ENCODE measurements at regions of chr10 and their contacts with region 1.

Region 1: DNA sequence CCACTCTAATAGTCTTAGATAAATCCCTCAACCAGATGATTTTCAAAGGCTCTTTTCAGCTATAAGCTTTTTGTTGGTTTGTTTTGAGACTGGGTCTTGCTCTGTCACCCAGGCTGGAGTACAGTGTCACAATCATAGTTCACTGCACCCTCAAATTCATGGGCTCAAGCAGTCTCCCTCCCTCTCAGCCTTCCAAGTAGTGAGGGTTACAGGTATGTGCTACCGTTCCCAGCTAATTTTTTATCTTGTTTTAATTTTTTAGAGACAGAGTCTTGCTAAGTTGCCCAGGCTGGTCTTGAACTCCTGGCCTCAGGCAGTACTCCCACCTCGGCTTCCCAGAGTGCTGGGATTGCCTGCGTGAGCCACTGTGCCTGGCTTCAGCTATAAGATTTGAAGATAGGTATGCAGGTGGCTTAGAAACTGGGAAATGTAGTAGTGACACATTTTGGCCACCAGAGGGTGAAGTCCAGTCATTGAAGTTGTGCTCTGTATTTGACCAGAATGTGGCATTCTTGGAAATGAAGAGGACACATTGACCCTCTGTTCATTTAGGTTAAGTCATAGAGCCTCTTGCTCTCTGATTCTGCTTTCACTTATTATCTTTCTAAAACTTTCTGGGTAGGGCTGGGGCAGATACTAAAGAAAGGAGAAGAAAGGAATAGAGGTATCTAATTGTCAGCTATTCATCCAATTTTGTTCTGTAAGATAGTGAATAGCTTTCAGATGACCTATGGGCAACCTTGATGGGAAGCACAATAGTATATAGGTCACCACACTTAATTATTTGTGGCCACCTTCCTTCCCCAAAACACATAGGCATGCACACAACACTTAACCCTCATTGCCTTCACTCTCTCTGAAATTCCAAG is 36.0 kb downstream of the R3HCC1L start:
- DNase-seq: peak; percentile 39 to 51 (median 42)
- H3K4me3 ChIP-seq: no peak overlapping the region
- H3K27ac ChIP-seq: no peak overlapping the region
- H3K4me1 ChIP-seq: peaks cover 0 to 6% (median 1%) of the 10 kb centered on the region in 4 experiments
- H3K27me3 ChIP-seq: no peaks in the 10 kb centered on the region

Region 2: DNA sequence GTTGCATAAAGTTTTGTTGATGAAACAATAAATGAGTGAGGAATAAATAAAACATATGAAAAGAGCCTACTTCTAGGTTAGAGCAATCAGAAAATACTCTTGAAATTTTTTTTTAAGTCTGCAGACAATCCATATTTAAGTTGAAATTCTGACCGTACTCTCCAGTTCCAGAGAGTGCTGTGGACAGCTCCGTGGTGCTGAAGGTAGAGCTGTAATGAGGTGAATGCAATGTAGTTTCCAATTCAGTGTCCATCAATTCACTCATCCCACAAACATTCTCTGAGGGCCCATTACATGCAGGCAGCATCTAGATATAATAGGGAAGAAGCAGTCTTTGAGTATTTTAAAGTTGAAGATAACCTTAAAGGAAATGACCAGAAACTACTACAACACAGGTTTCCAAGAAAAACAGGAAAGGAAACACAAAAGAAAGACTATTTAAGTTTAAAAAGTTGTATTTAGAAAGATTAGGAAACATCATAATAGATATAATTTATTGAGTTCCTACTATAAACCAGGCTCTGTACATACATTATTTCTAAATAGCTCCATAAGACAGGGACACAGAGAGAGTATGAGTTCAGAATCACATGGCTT is 96.1 kb before region 1 on chr10:
- CTCF ChIA-PET with region 1: no interaction called
- POLR2A ChIA-PET with region 1: no interaction called
- DNase-seq: peak; percentile 13 to 60 (median 59)
- H3K4me3 ChIP-seq: no peak overlapping the region
- H3K27ac ChIP-seq: no peak overlapping the region
- H3K4me1 ChIP-seq: peaks cover 0 to 21% (median 11%) of the 10 kb centered on the region in 4 experiments
- H3K27me3 ChIP-seq: peaks cover 0 to 7% (median 5%) of the 10 kb centered on the region in 5 experiments

Region 3: DNA sequence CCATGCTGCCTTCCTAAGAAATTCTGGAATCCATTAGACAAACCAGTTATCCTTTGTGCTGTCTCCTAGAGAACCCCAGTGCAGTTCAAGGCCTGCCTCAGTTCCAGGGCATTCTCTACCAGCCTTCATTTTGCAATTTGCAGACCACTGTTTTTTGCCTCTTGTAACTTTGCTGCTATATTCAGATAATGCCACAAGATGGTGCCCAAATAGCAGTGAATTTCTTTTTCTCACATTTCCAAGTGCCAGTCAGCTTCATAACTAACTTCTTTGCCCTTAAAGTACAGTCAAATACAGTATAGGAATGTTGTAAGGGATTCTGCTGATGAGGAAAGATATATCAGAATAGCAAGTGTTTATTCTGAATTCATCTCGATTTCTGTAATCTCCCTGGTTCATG is 72.3 kb after region 1 on chr10:
- CTCF ChIA-PET with region 1: interaction called, 10 read pairs
- POLR2A ChIA-PET with region 1: no interaction called
- DNase-seq: peak; percentile 30 to 58 (median 55)
- H3K4me3 ChIP-seq: no peak overlapping the region
- H3K27ac ChIP-seq: no peak overlapping the region
- H3K4me1 ChIP-seq: peaks cover 0 to 6% (median 4%) of the 10 kb centered on the region in 4 experiments
- H3K27me3 ChIP-seq: no peaks in the 10 kb centered on the region